ENCODE measurements at regions of chr1 and their contacts with region 1.

Region 1: DNA sequence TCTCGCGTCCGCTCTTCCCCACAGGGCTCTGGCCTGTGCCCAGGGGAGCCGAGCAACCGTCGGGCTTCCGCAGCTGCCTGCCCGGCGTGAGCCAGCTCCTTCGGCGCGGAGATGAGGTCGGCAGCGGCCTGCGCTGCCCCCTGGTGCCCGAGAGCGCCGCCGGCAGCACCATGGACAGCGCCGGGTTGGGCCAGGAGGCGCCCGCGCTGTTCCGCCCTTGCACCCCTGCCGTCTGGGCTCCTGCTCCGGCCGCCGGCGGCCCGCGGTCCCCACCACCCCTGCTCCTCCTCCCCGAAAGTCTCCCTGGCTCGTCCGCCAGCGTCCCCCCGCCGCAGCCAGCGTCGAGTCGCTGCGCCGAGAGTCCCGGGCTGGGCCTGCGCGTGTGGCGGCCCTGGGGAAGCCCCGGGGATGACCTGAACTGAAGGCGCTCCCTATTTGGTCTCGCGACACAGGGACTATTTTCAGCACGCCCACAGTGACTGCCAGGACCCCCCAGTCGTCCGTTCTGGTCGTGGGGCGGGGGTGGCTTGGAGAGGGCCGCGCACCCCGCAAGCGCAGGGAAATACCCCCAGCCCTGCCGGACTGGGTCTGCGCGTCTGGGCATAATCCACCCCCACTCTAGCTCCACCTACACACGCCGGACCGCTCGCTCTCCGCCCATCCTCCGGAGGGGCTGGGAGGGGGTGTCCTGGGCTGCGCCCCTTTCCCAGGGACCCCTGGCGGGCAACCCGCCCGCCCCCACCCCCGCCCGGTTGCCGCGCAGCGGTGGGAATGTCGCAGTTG is 1.3 kb downstream of the HES3 start:
- DNase-seq: peak; percentile 21
- H3K4me3 ChIP-seq: no peak overlapping the region
- H3K27ac ChIP-seq: no peak overlapping the region
- H3K27me3 ChIP-seq: peaks cover 61% of the 10 kb centered on the region
- CTCF ChIP-seq: peak; percentile 84

Region 2: GRCh38 chr1:6256648-6257047 is 11.4 kb after region 1 on chr1:
- CTCF ChIA-PET with region 1: interaction called, 11 read pairs
- POLR2A ChIA-PET with region 1: interaction called, 4 read pairs
- DNase-seq: no peak
- H3K4me3 ChIP-seq: no peak overlapping the region
- H3K27ac ChIP-seq: no peak overlapping the region
- H3K27me3 ChIP-seq: no peaks in the 10 kb centered on the region
- CTCF ChIP-seq: no peak

Region 3: GRCh38 chr1:6350416-6351088 is 105.3 kb after region 1 on chr1:
- CTCF ChIA-PET with region 1: interaction called, 266 read pairs
- POLR2A ChIA-PET with region 1: no interaction called
- DNase-seq: no peak
- H3K4me3 ChIP-seq: no peak overlapping the region
- H3K27ac ChIP-seq: no peak overlapping the region
- H3K27me3 ChIP-seq: no peaks in the 10 kb centered on the region
- CTCF ChIP-seq: no peak

Region 4: DNA sequence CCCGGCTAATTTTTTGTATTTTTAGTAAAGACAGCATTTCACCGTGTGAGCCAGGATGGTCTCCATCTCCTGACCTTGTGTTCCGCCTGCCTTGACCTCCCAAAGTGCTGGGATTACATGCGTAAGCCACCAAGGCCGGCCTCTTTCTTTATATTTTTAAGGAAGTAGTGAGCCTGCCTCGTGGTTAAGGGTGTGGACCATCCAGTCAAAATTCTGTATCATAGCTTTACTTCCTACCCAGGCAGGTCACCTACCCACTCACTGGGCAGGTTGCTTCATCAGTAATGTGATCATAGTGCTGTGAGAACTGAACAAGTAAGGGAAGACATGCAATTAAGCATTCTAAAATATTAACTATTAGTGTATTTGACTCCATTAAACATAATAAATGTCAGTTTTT is 156.4 kb after region 1 on chr1:
- CTCF ChIA-PET with region 1: interaction called, 20 read pairs
- POLR2A ChIA-PET with region 1: no interaction called
- DNase-seq: no peak
- H3K4me3 ChIP-seq: no peak overlapping the region
- H3K27ac ChIP-seq: no peak overlapping the region
- H3K27me3 ChIP-seq: peaks cover 3% of the 10 kb centered on the region
- CTCF ChIP-seq: no peak

Region 5: DNA sequence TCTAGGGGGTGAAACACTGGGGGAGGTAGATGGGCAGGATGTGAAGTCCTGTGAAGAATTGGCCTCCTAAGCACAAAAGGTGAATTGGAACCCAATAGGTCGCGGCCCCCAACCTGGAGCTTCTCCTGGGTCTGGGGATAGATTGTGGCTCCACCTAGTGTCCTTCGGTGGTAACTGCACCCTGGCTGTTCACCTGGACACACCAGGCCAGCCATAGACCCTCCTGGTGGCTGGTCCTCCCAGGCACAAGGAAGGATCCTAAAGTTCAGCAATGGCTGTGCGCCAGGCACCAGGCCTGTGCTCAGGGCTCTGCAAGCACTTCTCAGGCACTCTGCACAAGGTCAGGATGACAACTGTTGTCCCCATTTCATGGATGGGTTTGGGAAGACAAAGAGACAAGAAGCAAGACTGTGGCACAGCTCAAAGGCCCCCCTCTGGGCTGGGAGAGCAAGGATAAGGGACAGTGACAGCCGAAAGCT is 192.8 kb after region 1 on chr1:
- CTCF ChIA-PET with region 1: interaction called, 18 read pairs
- POLR2A ChIA-PET with region 1: no interaction called
- DNase-seq: no peak
- H3K4me3 ChIP-seq: no peak overlapping the region
- H3K27ac ChIP-seq: no peak overlapping the region
- H3K27me3 ChIP-seq: peaks cover 25% of the 10 kb centered on the region
- CTCF ChIP-seq: peak; percentile 86

Measured in AG04450 (cell line).